ENCODE measurements at regions of chr15 and their contacts with region 1.

Region 1: DNA sequence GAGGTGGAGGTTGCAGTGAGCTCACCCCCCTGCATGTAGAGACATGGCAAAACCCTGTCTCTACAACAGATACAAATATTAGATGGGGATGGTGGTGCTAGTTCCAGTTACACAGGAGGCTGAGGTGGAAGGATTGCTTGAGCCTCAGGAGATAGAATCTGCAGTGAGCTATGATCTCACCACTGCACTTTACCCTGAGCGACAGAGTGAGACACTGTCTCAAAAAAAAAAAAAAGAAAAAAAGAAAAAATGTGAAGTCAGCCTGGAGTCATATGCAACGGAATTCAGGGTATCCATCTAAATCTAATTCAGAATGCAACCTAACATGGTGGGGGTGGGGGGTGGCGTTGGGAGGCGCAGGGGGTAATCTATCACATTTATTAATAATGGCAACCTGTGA is 37.1 kb upstream of the NR2F2 start:
- DNase-seq: no peak
- H3K4me3 ChIP-seq: no peak overlapping the region
- H3K27me3 ChIP-seq: no peaks in the 10 kb centered on the region
- CTCF ChIP-seq: no peak

Region 2: GRCh38 chr15:96160269-96160668 is 133.2 kb before region 1 on chr15:
- CTCF ChIA-PET with region 1: no interaction called
- POLR2A ChIA-PET with region 1: interaction called, 11 read pairs
- DNase-seq: no peak
- H3K4me3 ChIP-seq: no peak overlapping the region
- H3K27me3 ChIP-seq: no peaks in the 10 kb centered on the region
- CTCF ChIP-seq: no peak

Measured in BJ (cell line).